ENCODE measurements at regions of chr2 and their contacts with region 1.

Region 1: DNA sequence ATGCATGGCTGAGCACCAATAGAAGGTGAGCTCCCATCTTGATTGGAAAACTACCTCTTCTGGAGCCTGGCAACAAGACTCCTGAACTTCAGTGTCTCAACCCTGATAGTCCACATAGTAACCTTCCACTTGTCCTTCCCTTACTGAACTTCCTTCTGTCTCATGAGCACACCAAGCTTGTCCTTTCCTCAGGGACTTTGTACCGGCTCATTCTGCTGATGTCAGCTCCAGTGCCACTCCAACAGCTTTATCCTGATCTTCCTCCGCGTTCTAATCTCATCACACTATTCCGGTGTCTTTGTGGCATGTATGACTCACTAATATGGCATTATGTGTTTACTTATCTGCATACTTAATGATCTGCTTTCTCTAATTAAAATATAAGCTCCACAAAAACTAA is 862.0 kb upstream of the ID2 start:
- DNase-seq: no peak
- H3K4me3 ChIP-seq: no peak overlapping the region
- H3K27ac ChIP-seq: no peak overlapping the region
- H3K27me3 ChIP-seq: peaks cover 0 to 5% (median 0%) of the 10 kb centered on the region in 45 donors
- CTCF ChIP-seq: no peak

Region 2: GRCh38 chr2:7927691-7928090 is 107.8 kb after region 1 on chr2:
- intact Hi-C with region 1: loop called in 1 of 2 experiments (anchors 5 kb)
- DNase-seq: no peak
- H3K4me3 ChIP-seq: no peak overlapping the region
- H3K27ac ChIP-seq: no peak overlapping the region
- H3K27me3 ChIP-seq: no peaks in the 10 kb centered on the region
- CTCF ChIP-seq: no peak